Mammary epithelial cell (primary cell): ENCODE measurements at regions of chr12 and their contacts with region 1.

Region 1: GRCh38 chr12:27751386-27752047 is 28.5 kb upstream of the KLHL42 start:
- DNase-seq: peak; percentile 88
- H3K4me3 ChIP-seq: no peak overlapping the region
- H3K27ac ChIP-seq: peak overlapping the region; percentile 33
- H3K4me1 ChIP-seq: peaks cover 42% of the 10 kb centered on the region
- H3K27me3 ChIP-seq: no peaks in the 10 kb centered on the region
- CTCF ChIP-seq: no peak

Region 2: DNA sequence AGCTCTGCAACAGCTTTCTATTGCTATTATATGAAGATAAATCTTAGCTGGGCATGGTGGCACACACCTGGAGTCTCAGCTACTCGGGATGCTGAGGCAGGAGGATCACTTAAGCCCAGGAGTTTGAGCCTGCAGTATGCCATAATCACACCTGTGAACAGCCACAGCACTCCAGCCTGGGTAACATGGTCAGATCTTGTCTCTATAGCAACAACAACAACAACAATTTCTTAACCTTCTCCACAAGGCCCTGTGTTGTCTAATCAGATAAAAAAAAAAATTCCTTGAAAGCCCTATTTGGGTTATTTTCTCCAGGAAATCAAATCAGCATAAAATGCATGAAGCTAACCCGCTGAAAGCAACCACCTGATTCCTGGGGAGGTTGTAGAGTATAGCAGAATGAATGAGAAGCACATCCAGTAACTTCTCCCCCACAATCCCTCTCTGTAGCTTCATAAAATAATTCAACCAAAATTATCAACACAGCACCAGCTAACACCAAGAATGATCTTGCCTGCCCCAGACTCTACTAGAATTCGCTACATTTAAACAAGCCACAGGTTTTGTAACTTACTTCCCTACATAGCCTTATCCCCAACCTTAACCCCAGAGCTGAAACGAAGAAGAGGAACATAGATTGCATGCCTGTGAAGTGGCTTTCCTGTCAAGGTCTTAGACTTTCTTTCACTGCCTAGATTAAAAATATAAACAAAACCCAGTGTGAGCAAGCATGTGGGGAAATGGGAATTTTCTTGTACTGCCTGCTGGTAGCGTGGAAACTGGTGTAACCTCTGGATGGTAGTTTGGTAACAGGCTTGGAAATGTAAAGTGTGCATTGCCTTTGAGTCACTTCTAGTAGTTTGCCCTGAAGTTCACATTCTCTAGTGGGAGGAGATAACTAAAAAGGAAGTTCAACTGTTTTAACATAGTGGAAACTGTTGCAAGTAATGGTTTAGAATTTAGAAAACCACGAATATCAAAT is 513.4 kb before region 1 on chr12:
- CTCF ChIA-PET with region 1: no interaction called
- dilution Hi-C with region 1: no loop called
- in situ Hi-C with region 1: no loop called
- intact Hi-C with region 1: no loop called
- DNase-seq: no peak
- H3K4me3 ChIP-seq: no peak overlapping the region
- H3K27ac ChIP-seq: no peak overlapping the region
- H3K4me1 ChIP-seq: no peaks in the 10 kb centered on the region
- H3K27me3 ChIP-seq: no peaks in the 10 kb centered on the region
- CTCF ChIP-seq: no peak

Region 3: DNA sequence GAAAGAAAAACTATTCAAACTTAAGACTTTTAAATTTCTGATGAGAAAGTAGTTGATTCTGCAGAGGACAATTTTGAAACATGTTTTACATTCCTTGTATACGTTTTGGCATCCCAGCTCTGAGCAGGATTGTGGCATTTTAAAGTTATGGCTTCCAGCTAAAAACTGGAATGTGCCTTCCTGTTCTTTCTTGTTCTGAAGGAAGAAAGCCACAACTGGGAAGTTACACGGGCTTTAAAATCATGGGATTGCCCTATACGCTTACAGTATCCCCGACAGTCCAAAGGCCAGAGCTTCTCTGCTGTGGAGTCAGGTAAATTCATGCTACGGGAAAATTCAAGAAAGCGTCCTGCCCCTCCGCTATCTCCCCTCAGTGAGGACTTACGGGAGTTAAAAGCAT is 17.7 kb after region 1 on chr12:
- CTCF ChIA-PET with region 1: interaction called, 4 read pairs
- dilution Hi-C with region 1: no loop called
- in situ Hi-C with region 1: no loop called
- intact Hi-C with region 1: loop called (anchors 2 kb)
- DNase-seq: no peak
- H3K4me3 ChIP-seq: no peak overlapping the region
- H3K27ac ChIP-seq: no peak overlapping the region
- H3K4me1 ChIP-seq: peaks cover 33% of the 10 kb centered on the region
- H3K27me3 ChIP-seq: no peaks in the 10 kb centered on the region
- CTCF ChIP-seq: no peak

Region 4: DNA sequence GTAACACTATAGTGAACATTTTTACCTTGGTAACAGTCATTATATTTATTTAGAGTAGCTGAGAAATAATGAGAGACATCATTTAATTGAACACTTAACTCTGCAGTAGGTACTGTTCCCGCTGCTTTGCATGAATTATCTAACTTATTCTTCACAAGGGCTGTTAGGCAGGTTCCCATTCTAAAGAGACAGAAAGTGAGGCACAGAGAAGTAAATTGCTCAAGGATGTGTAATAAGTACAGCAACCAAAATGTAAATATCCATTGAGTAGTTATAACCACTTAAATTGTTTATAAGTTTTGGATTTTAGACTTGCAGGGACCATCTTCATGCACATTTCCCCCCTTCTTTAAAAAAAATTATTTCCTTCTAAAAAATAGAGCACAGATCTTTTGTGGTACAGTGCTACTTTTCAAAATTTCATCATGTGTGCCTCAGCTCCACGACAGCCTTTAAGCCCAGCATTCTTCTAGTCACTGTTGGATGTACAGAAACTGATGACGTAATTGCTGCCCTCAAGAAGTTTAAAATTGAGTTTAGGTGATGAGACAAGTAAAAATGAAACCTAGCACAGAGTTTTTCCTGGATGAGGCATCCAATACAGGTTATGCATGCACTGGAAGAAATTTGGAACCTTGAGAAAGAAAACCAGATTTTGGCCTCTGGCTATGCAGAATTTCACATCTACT is 34.5 kb after region 1 on chr12:
- CTCF ChIA-PET with region 1: no interaction called
- dilution Hi-C with region 1: no loop called
- in situ Hi-C with region 1: no loop called
- intact Hi-C with region 1: loop called (anchors 5 kb)
- DNase-seq: peak; percentile 83
- H3K4me3 ChIP-seq: no peak overlapping the region
- H3K27ac ChIP-seq: peak overlapping the region; percentile 73
- H3K4me1 ChIP-seq: peaks cover 28% of the 10 kb centered on the region
- H3K27me3 ChIP-seq: no peaks in the 10 kb centered on the region
- CTCF ChIP-seq: no peak

Region 5: GRCh38 chr12:27821259-27821973 is 69.9 kb after region 1 on chr12:
- CTCF ChIA-PET with region 1: no interaction called
- dilution Hi-C with region 1: no loop called
- in situ Hi-C with region 1: no loop called
- intact Hi-C with region 1: loop called (anchors 5 kb)
- DNase-seq: peak; percentile 86
- H3K4me3 ChIP-seq: peak overlapping the region in 1 of 3 experiments; percentile 14
- H3K27ac ChIP-seq: peak overlapping the region; percentile 100
- H3K4me1 ChIP-seq: peaks cover 26% of the 10 kb centered on the region
- H3K27me3 ChIP-seq: no peaks in the 10 kb centered on the region
- CTCF ChIP-seq: peak; percentile 81 to 92